SK-N-SH (cell line): ENCODE measurements at regions of chr18 and their contacts with region 1.

Region 1: DNA sequence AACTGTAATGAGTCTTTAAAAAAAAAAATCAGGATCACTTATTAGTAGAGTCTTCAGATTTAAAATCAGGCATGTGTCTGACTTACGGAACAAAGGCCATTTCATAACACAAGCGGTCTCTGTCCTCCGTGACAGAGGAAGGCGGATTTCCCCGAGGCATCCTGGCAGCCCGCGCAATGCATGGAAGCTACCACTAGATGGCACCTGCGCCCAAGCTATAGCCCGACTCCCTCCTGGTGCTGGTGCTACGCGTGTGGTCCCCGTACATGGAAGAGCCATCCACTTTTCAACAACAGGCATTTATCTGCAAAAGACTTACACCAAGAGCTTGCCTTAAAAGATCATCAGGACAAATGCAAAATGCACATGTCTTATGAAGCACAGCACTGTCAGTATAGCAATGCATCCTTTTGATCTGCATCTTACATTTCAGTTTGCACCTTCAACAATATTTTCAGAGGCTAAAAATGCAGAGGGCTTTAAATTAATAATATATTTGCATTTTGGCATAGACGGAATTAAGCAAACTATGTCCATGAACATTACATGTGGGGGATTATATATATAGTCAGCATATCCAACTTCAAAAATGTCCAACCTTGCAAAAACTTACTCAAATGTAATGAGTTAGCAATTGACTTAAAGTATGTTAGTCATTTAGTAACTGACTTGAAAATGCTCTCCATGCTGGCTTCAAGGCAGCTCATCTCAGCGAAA is 96.0 kb downstream of the ZNF516 start:
- DNase-seq: peak; percentile 93
- H3K4me3 ChIP-seq: peak overlapping the region in 1 of 2 experiments; percentile 26; a peak in 1 of 4 replicates
- H3K27ac ChIP-seq: no peak overlapping the region
- H3K4me1 ChIP-seq: peaks cover 0 to 7% of the 10 kb centered on the region in 2 experiments; a peak in 2 of 4 replicates
- H3K27me3 ChIP-seq: no peaks in the 10 kb centered on the region
- CTCF ChIP-seq: peak; percentile 95
- EP300 ChIP-seq: no peak
- RAD21 ChIP-seq: peak; percentile 97

Region 2: DNA sequence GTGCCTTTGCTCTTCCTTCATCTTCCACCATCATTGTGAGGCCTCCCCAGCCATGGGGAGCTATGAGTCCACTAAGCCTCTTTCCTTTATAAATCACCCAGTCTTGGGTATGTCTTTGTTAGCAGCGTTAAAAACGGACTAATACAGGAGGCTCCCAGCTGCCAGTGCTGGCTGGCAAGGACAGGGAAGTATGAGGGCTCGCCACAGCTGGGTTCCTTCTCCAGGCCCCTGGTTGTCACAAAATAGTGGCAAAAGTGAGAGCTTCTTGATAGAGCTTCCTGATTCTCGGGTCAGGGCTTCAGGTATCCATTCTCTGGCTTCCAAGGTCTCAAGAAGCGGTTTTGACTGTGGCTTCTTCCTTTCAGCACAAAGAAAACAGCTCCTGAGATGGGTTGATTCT is 11.0 kb after region 1 on chr18:
- CTCF ChIA-PET with region 1: interaction called, 12 read pairs
- POLR2A ChIA-PET with region 1: no interaction called
- DNase-seq: no peak
- H3K4me3 ChIP-seq: no peak overlapping the region
- H3K27ac ChIP-seq: no peak overlapping the region
- H3K4me1 ChIP-seq: no peaks in the 10 kb centered on the region
- H3K27me3 ChIP-seq: no peaks in the 10 kb centered on the region
- CTCF ChIP-seq: no peak
- EP300 ChIP-seq: no peak
- RAD21 ChIP-seq: no peak

Region 3: DNA sequence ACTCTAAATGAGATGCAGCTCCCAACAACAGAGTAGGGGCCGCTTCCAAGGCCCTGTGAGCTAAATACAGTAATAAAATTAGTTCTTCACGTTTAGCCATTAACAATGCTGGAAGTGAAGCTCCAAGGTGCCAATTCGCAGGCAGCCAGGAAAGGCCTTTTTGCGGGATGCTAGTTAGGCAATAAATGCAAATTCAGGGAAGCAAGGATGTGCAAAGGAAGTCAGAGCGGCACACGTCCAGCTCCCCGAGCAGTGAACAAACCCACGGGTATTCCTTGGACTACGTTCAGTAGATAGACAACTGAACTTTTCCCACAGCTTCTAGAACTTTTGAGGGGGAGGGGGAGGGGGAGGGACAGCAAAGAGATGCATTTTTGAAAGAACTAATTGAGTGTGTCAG is 89.1 kb after region 1 on chr18:
- CTCF ChIA-PET with region 1: interaction called, 10 read pairs
- POLR2A ChIA-PET with region 1: no interaction called
- DNase-seq: no peak
- H3K4me3 ChIP-seq: no peak overlapping the region
- H3K27ac ChIP-seq: peak overlapping the region in 1 of 2 experiments; percentile 11; a peak in 2 of 4 replicates
- H3K4me1 ChIP-seq: peaks cover 15 to 30% of the 10 kb centered on the region in 2 experiments; a peak in 3 of 4 replicates
- H3K27me3 ChIP-seq: no peaks in the 10 kb centered on the region
- CTCF ChIP-seq: no peak
- EP300 ChIP-seq: no peak
- RAD21 ChIP-seq: no peak

Region 4: DNA sequence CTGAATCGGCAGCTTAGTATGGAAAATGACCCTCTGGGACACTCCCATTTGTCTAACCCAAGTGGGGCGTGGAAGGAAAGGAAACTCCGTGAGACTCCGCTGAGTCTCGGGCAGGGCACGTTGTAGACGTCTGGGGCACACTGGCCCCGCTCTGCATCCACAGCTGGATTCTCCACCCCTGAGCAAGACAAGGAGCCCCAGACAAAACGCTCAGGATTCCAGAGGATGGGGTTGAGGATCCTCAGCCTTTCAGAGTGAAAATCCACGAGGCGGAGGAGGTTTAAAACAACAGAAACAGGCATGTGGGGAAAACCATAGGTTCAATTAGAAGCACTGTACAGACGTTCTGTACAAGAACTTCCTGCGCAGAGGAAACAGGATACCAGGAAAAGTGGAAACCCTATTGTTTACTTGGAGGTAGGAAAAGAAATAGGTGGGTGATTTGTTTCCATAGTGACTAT is 298.4 kb after region 1 on chr18:
- CTCF ChIA-PET with region 1: interaction called, 14 read pairs
- POLR2A ChIA-PET with region 1: no interaction called
- DNase-seq: no peak
- H3K4me3 ChIP-seq: no peak overlapping the region
- H3K27ac ChIP-seq: no peak overlapping the region
- H3K4me1 ChIP-seq: no peaks in the 10 kb centered on the region
- H3K27me3 ChIP-seq: no peaks in the 10 kb centered on the region
- CTCF ChIP-seq: no peak
- EP300 ChIP-seq: no peak
- RAD21 ChIP-seq: no peak